Common myeloid progenitor, CD34-positive (primary cell): ENCODE measurements at regions of chr22 and their contacts with region 1.

Region 1: GRCh38 chr22:40679964-40680818 is 907 bp downstream of the MCHR1 start:
- DNase-seq: peak in 2 of 3 donors; percentile 22
- H3K4me3 ChIP-seq: peak overlapping the region in 1 of 7 experiments; percentile 15
- H3K27ac ChIP-seq: no peak overlapping the region
- H3K4me1 ChIP-seq: peaks cover 0 to 16% (median 9%) of the 10 kb centered on the region in 4 experiments
- H3K27me3 ChIP-seq: peaks cover 0 to 36% (median 24%) of the 10 kb centered on the region in 5 experiments

Region 2: DNA sequence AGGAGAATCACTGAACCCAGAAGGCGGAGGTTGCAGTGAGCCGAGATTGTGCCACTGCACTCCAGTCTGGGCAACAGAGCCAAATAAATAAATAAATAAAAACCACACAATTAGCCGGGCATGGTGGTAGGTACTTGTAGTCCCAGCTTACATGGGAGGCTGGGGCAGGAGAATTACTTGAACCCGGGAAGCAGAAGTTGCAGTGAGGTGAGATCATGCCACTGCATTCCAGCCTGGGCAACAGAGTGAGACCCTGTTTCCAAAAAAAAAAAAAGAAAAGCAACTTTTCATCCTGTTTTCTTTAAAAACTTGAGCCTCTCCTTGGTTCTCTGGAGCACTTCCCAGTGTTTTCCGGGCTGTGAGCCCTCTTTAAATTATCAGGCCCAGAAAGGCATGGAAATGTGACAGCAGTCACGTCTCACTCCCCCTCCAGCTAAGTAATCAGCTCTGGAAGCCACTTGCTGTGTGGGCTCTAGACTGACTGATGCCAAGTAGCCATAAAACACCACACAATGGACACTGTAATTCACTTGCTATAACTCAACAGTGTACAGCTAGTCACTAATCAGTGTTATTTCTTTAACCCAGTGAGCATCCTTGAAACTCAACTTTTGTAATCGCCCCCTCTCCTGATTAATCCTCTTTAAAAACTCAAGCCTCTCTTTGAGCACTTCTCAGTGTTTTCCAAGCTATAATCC is 13.9 kb before region 1 on chr22:
- CTCF ChIA-PET with region 1: no interaction called
- POLR2A ChIA-PET with region 1: no interaction called
- DNase-seq: no peak
- H3K4me3 ChIP-seq: no peak overlapping the region
- H3K27ac ChIP-seq: no peak overlapping the region
- H3K4me1 ChIP-seq: peaks cover 0 to 5% (median 0%) of the 10 kb centered on the region in 4 experiments
- H3K27me3 ChIP-seq: no peaks in the 10 kb centered on the region

Region 3: GRCh38 chr22:40721266-40721665 is 41.1 kb after region 1 on chr22:
- CTCF ChIA-PET with region 1: interaction called, 11 read pairs
- POLR2A ChIA-PET with region 1: interaction called, 5 read pairs
- DNase-seq: peak; percentile 43 to 88 (median 76)
- H3K4me3 ChIP-seq: peak overlapping the region in 1 of 7 experiments; percentile 7
- H3K27ac ChIP-seq: no peak overlapping the region
- H3K4me1 ChIP-seq: peaks cover 4 to 10% (median 8%) of the 10 kb centered on the region in 4 experiments
- H3K27me3 ChIP-seq: no peaks in the 10 kb centered on the region

Region 4: DNA sequence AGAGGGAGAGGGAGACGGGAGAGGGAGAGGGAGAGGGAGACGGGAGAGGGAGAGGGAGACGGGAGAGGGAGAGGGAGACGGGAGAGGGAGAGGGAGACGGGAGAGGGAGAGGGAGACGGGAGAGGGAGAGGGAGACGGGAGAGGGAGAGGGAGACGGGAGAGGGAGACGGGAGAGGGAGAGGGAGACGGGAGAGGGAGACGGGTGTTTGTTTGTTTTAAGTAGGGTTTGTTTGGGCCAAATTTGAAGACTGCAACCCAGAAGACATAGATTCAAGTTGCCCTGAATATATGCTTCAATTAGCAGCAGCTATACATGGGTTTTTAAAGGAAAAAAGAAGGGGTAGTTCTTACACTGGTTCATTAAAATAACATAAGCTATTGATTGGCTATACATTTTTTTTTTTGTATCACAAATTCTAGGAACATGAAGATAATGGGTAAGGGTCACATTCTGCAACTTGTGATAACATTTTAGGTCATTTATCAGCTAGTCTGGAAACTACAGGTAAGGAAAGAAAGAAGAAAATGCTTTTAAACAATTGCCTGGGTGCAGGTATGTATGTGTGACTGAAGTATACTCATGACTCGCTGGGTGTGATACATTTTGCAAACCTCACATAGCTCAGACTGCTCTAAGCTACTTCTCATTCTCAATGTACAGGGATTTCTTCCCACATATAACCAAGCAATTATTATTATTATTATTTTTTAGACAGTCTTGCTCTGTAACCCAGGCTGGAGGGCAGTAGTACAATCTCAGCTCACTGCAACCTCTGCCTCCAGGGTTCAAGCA is 66.4 kb after region 1 on chr22:
- CTCF ChIA-PET with region 1: interaction called, 11 read pairs
- POLR2A ChIA-PET with region 1: no interaction called
- DNase-seq: no peak
- H3K4me3 ChIP-seq: no peak overlapping the region
- H3K27ac ChIP-seq: no peak overlapping the region
- H3K4me1 ChIP-seq: no peaks in the 10 kb centered on the region
- H3K27me3 ChIP-seq: no peaks in the 10 kb centered on the region

Region 5: GRCh38 chr22:40757071-40757470 is 76.9 kb after region 1 on chr22:
- CTCF ChIA-PET with region 1: interaction called, 123 read pairs
- POLR2A ChIA-PET with region 1: interaction called, 5 read pairs
- DNase-seq: no peak
- H3K4me3 ChIP-seq: no peak overlapping the region
- H3K27ac ChIP-seq: no peak overlapping the region
- H3K4me1 ChIP-seq: no peaks in the 10 kb centered on the region
- H3K27me3 ChIP-seq: no peaks in the 10 kb centered on the region

Region 6: DNA sequence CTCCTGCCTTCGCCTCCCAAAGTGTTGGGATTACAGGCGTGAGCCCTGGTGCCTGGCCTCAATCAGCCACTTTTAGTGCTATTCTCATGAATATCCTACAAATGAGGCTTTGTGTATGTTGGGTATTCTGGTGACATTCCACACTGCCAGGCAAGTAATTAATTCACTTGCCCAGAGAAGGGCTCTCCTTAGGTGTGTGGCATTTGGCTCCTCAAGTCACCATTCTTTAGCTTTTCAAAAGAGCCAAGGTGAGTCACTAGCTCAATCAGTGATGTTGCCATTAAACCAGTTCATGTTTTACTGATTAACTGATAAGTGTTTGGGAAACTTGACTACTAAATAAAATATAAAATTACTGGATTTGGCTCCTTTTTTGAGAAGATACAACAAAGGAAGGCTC is 86.8 kb after region 1 on chr22:
- CTCF ChIA-PET with region 1: interaction called, 10 read pairs
- POLR2A ChIA-PET with region 1: no interaction called
- DNase-seq: no peak
- H3K4me3 ChIP-seq: no peak overlapping the region
- H3K27ac ChIP-seq: no peak overlapping the region
- H3K4me1 ChIP-seq: peaks cover 0 to 3% (median 0%) of the 10 kb centered on the region in 4 experiments
- H3K27me3 ChIP-seq: no peaks in the 10 kb centered on the region

Region 7: DNA sequence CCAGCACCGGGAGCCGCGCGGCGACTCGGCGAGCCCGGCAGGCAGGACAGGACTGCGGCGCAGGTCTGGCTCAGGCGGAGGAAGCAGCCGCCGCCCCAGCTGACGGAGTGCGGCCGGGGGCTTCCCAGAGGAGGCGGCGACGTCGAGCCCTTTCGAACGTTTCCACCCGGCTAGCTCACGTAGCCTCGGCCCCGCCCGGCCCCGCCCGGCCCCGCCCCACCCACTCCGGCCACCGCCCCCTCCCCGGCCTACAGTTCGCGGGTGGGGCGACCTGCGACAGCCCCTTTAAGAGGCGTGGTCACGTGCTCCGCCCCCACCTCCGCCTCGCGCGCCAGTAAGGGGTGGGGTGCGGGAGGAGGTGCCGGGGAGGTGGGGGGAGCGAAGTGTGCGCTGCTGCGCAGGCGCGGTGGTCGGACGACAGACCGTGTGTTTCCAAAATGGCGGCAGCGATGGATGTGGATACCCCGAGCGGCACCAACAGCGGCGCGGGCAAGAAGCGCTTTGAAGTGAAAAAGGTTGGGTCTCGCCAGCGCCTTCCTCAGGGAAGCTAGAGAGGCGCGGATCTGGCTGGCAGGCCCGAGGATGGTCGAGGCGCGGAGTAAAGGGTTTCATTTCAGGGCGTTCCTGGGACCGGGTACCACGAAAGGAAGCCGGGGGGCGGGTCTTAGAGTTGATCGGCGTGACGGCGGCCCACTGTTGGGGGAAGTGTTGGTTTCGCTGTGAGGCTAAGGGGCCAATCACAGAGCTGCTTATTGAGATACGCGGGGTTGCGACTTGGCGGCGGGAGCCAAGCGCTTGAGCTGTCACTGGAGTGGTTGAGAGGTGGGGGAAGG is 271.0 kb after region 1 on chr22 and contains the start of gene RBX1:
- CTCF ChIA-PET with region 1: no interaction called
- POLR2A ChIA-PET with region 1: no interaction called
- DNase-seq: peak; percentile 98 to 99 (median 99)
- H3K4me3 ChIP-seq: peak within 1 kb of the TSS; percentile 81 to 97 (median 91)
- H3K27ac ChIP-seq: peak within 1 kb of the TSS; percentile 79 to 92
- H3K4me1 ChIP-seq: peaks cover 8 to 30% (median 14%) of the 10 kb centered on the region in 4 experiments
- H3K27me3 ChIP-seq: no peaks in the 10 kb centered on the region